Right ventricle myocardium inferior (tissue), 1 donor: ENCODE measurements at regions of chr1 and their contacts with region 1.

Region 1: DNA sequence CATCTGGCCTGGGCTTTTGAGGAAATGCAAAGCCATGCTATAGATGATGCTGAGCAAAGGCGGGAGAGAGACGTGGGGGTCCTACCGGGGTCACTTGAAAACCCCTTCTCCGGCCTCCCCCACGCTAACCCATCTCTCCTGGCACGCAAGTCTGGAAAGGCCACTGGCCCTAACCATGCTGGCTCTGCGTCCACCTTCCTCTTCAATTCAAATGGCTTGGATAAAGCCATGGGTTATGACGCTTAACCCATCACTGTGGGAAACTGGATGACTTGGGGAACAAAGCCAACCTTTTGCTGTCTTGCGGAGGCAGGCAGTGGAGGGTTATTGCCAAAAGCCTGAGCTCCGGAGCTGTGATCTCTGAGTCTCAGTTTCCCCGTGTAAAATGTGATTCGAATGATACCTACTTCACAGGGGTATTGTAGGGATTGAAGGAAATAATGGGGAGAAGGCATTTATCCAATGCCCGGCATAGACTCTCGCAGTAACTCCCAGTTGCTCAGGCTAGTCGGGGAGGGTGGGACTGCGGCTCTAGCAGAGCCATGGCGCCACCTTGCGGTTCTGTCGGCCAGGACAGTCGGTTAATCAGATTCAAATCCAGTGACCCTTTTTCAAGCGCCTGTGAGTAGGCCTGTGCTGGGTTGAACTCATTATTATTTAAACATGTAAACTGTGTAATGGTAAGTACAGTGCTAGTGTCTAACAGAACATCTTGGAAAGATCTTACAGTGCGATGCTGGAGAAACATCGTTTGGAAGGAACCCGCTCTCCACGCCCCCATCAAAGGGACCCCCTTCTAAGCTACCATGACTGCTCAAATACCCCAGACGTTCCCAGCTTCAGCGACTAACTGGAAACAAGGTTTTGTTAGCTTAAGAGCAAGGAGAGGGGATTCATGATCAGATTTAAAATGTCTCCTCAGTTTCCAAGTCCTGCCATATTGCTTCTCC is 20.3 kb downstream of the NEK2 start:
- DNase-seq: peak; percentile 93
- ATAC-seq: peak; percentile 95

Region 2: DNA sequence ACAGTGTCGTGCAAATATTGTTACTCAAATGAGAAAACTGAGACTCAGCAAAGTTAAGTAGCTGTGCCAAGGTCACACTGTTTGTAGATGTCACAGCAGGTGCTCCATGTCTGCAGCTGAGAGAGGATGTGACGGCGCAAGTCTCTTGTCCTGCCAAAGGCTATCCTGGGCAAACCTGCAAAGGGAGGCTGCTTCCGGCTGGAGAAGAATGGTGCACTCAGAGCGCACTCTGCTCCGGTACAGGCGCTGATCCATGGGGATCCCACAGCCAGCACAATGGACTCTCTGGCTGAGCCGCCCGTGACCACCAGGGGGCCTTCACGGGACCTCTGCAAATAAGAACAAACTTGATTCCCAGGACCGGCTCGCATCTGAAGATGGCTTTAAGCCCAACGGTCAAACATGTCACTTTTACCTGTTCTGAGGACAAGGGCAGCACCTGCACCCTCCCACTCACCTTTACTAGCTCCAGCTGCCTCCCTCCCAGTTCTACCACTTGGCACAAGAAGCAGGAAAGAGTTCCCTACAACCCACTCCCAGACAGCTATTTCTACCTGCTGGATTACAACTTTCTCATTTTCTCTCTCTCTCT is 185.1 kb before region 1 on chr1:
- intact Hi-C with region 1: loop called (anchors 2 kb)
- DNase-seq: peak; percentile 82
- ATAC-seq: peak; percentile 90